K562 (cell line): ENCODE measurements at regions of chr7 and their contacts with region 1.

Region 1: DNA sequence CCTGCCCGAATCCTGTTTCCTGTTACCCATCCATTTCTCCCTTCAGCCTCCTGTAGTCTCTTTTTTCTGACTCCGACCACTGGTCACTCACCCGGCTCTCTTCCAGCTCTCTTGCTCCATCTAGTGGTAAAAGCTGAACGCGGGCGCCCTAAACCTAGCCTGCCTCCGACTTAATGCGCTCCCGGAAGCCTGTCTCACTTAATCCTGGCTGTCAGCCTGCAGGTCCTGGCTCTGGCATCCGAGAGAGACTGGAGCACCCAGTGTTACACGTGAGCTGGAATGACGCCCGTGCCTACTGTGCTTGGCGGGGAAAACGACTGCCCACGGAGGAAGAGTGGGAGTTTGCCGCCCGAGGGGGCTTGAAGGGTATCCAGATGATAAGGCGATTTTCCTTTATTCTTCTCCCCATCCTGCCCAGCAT is 10.3 kb downstream of the SUMF2 start:
- DNase-seq: peak; percentile 74 to 82 (median 80)
- ATAC-seq: peak; percentile 96
- H3K4me3 ChIP-seq: no peak overlapping the region
- H3K27ac ChIP-seq: no peak overlapping the region; the same call in 2 of the 3 replicates
- H3K4me1 ChIP-seq: peaks cover 0 to 5% of the 10 kb centered on the region in 2 experiments; a peak in 1 of 5 replicates
- H3K27me3 ChIP-seq: no peaks in the 10 kb centered on the region
- CTCF ChIP-seq: peak; percentile 86 to 92 (median 88)
- EP300 ChIP-seq: no peak
- POLR2A ChIP-seq: 0 out of 2 replicates have a peak, but pooled peaks have one; percentile 29
- RAD21 ChIP-seq: peak; percentile 88 to 91

Region 2: GRCh38 chr7:56003749-56004148 is 70.6 kb before region 1 on chr7:
- CTCF ChIA-PET with region 1: interaction called, 6 read pairs
- POLR2A ChIA-PET with region 1: interaction called, 5 read pairs
- in situ Hi-C with region 1: loop called (anchors 5 kb)
- intact Hi-C with region 1: loop called (anchors 1 kb)
- DNase-seq: peak in 1 of 4 experiments; percentile 7
- ATAC-seq: no peak
- H3K4me3 ChIP-seq: no peak overlapping the region
- H3K27ac ChIP-seq: no peak overlapping the region
- H3K4me1 ChIP-seq: no peaks in the 10 kb centered on the region; a peak in 1 of 5 replicates
- H3K27me3 ChIP-seq: no peaks in the 10 kb centered on the region
- CTCF ChIP-seq: no peak
- EP300 ChIP-seq: no peak
- POLR2A ChIP-seq: no peak
- RAD21 ChIP-seq: no peak